ENCODE measurements at regions of chr18 and their contacts with region 1.

Region 1: DNA sequence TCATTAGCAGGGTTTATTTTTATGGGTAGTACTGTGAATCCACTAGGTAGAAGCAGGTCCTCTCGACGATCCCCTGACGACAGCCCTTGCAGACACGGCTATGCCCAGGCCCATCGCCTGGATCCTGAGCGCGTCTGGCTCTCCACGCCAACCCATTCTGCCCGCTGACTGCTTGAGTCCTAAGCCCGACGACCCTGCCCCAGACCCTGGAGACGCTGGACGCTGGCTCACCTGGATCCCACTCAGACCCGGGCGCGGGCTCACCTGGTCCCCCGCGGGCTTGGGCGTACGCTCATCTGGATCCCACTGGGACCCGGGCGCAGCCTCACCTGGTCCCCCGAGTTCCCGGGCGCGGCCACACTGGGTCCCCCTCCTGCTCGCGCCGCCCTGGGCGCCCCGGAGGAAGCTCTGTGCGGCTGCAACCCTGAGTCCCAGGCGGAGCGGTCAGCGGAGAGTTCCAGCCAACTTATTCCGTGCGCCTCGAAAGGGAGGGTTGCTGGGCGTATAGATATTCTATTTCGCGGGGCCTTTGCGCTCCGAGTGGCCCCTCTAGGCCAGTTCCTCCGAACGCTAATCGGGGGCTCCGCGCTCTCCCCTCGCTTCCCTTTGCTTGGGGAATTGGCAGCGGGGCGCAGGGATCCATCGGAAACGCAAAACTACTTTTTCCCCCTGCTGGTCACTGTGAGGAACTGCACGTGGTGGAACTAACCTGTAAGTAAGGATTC is 22.4 kb upstream of the RMP24 start:
- DNase-seq: peak; percentile 18 to 77 (median 55)
- ATAC-seq: peak; percentile 93
- H3K4me3 ChIP-seq: peak overlapping the region; percentile 53 to 70
- H3K4me3 Mint-ChIP-seq: peak overlapping the region; percentile 86
- H3K27ac ChIP-seq: no peak overlapping the region
- H3K27ac Mint-ChIP-seq: no peak overlapping the region
- H3K4me1 ChIP-seq: no peaks in the 10 kb centered on the region
- H3K4me1 Mint-ChIP-seq: no peaks in the 10 kb centered on the region
- H3K27me3 ChIP-seq: peaks cover 5 to 6% of the 10 kb centered on the region in 2 experiments
- H3K27me3 Mint-ChIP-seq: peaks cover 19% of the 10 kb centered on the region
- CTCF ChIP-seq: peak; percentile 96

Region 2: GRCh38 chr18:35231052-35231451 is 719.0 kb before region 1 on chr18:
- CTCF ChIA-PET with region 1: no interaction called
- POLR2A ChIA-PET with region 1: no interaction called
- intact Hi-C with region 1: loop called in 1 of 2 experiments (anchors 1 kb)
- DNase-seq: peak; percentile 59 to 89 (median 80)
- ATAC-seq: peak; percentile 98
- H3K4me3 ChIP-seq: no peak overlapping the region
- H3K4me3 Mint-ChIP-seq: peak overlapping the region; percentile 50
- H3K27ac ChIP-seq: no peak overlapping the region
- H3K27ac Mint-ChIP-seq: no peak overlapping the region
- H3K4me1 ChIP-seq: no peaks in the 10 kb centered on the region
- H3K4me1 Mint-ChIP-seq: peaks cover 3% of the 10 kb centered on the region
- H3K27me3 ChIP-seq: peaks cover 0 to 3% of the 10 kb centered on the region in 2 experiments
- H3K27me3 Mint-ChIP-seq: no peaks in the 10 kb centered on the region
- CTCF ChIP-seq: peak; percentile 92

Region 3: GRCh38 chr18:35386600-35387351 is 563.3 kb before region 1 on chr18:
- CTCF ChIA-PET with region 1: no interaction called
- POLR2A ChIA-PET with region 1: no interaction called
- intact Hi-C with region 1: loop called (anchors 1 to 10 kb)
- DNase-seq: peak; percentile 18 to 88 (median 64)
- ATAC-seq: peak; percentile 99
- H3K4me3 ChIP-seq: no peak overlapping the region
- H3K4me3 Mint-ChIP-seq: no peak overlapping the region
- H3K27ac ChIP-seq: no peak overlapping the region
- H3K27ac Mint-ChIP-seq: no peak overlapping the region
- H3K4me1 ChIP-seq: no peaks in the 10 kb centered on the region
- H3K4me1 Mint-ChIP-seq: peaks cover 2% of the 10 kb centered on the region
- H3K27me3 ChIP-seq: peaks cover 0 to 4% of the 10 kb centered on the region in 2 experiments
- H3K27me3 Mint-ChIP-seq: peaks cover 19% of the 10 kb centered on the region
- CTCF ChIP-seq: peak; percentile 96

Region 4: DNA sequence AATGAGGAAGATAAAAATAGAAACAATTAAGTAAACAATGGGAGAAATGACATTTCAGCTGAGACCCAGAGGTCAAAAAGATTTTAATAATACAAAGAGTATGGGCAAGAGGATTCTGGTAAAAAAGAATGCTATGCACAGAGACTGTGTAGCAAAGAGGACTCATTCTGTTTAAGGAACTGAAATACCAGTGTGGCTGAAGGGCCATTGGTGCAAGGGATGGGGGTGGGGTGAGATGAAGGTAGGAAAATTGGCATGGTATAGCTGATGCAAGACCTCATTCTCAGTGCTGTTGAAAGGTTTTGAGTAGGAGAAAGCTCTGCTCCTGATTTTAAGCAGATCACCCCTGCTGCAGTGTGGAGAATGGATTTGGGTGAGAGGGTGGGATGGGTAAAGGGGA is 357.8 kb before region 1 on chr18:
- CTCF ChIA-PET with region 1: no interaction called
- POLR2A ChIA-PET with region 1: no interaction called
- intact Hi-C with region 1: loop called (anchors 1 to 2 kb)
- DNase-seq: no peak
- ATAC-seq: no peak
- H3K4me3 ChIP-seq: no peak overlapping the region
- H3K4me3 Mint-ChIP-seq: no peak overlapping the region
- H3K27ac ChIP-seq: no peak overlapping the region
- H3K27ac Mint-ChIP-seq: no peak overlapping the region
- H3K4me1 ChIP-seq: peaks cover 4% of the 10 kb centered on the region
- H3K4me1 Mint-ChIP-seq: peaks cover 45% of the 10 kb centered on the region
- H3K27me3 ChIP-seq: no peaks in the 10 kb centered on the region
- H3K27me3 Mint-ChIP-seq: no peaks in the 10 kb centered on the region
- CTCF ChIP-seq: no peak

Region 5: DNA sequence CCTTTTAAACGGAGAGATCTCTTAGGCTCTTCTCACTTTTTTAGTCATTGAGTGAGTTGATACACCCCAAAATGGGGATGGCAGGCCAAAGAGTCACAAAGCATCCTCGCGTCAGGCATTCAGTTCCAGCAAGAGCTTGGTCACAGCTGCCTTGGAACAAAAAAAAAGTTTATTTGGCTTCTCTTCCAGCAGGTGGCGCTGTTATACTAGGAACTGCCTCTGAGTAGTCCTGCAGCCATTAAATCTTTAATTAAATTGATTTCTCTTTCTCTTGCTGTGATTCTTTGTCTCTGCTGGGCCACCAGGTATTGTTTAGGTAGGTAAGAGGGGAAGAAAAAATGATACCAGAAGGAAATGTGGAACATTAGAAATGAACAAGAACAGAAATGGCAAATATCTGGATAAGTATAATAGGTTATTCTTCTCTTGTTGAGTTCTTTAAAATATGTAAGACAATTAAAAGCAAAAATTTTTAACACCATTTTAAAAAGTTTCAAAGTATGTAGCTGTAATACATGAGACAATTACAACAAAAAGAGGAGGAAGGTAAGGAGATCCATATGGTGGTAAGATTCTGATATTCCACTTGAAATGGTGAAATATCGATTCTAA is 193.5 kb before region 1 on chr18:
- CTCF ChIA-PET with region 1: interaction called, 6 read pairs
- POLR2A ChIA-PET with region 1: no interaction called
- intact Hi-C with region 1: loop called (anchors 2 to 10 kb)
- DNase-seq: peak in 8 of 9 experiments; percentile 35 to 64 (median 54)
- ATAC-seq: peak; percentile 40
- H3K4me3 ChIP-seq: no peak overlapping the region
- H3K4me3 Mint-ChIP-seq: no peak overlapping the region
- H3K27ac ChIP-seq: no peak overlapping the region
- H3K27ac Mint-ChIP-seq: no peak overlapping the region
- H3K4me1 ChIP-seq: no peaks in the 10 kb centered on the region
- H3K4me1 Mint-ChIP-seq: no peaks in the 10 kb centered on the region
- H3K27me3 ChIP-seq: peaks cover 0 to 8% of the 10 kb centered on the region in 2 experiments
- H3K27me3 Mint-ChIP-seq: peaks cover 24% of the 10 kb centered on the region
- CTCF ChIP-seq: peak; percentile 84

Region 6: GRCh38 chr18:35938158-35938557 is 11.9 kb before region 1 on chr18:
- CTCF ChIA-PET with region 1: interaction called, 19 read pairs
- POLR2A ChIA-PET with region 1: no interaction called
- intact Hi-C with region 1: no loop called
- DNase-seq: no peak
- ATAC-seq: no peak
- H3K4me3 ChIP-seq: no peak overlapping the region
- H3K4me3 Mint-ChIP-seq: no peak overlapping the region
- H3K27ac ChIP-seq: no peak overlapping the region
- H3K27ac Mint-ChIP-seq: no peak overlapping the region
- H3K4me1 ChIP-seq: no peaks in the 10 kb centered on the region
- H3K4me1 Mint-ChIP-seq: no peaks in the 10 kb centered on the region
- H3K27me3 ChIP-seq: no peaks in the 10 kb centered on the region
- H3K27me3 Mint-ChIP-seq: peaks cover 5% of the 10 kb centered on the region
- CTCF ChIP-seq: no peak

Region 7: GRCh38 chr18:35972197-35973052 is 22.4 kb after region 1 on chr18 and contains the start of gene RMP24:
- CTCF ChIA-PET with region 1: interaction called, 10 read pairs
- POLR2A ChIA-PET with region 1: interaction called, 5 read pairs
- intact Hi-C with region 1: loop called in 1 of 2 experiments (anchors 1 kb)
- DNase-seq: peak; percentile 88 to 97 (median 93)
- ATAC-seq: peak; percentile 84
- H3K4me3 ChIP-seq: peak within 1 kb of the TSS; percentile 60 to 89
- H3K4me3 Mint-ChIP-seq: peak within 1 kb of the TSS; percentile 94
- H3K27ac ChIP-seq: peak within 1 kb of the TSS; percentile 57 to 90
- H3K27ac Mint-ChIP-seq: peak within 1 kb of the TSS; percentile 98
- H3K4me1 ChIP-seq: peaks cover 35% of the 10 kb centered on the region
- H3K4me1 Mint-ChIP-seq: peaks cover 65% of the 10 kb centered on the region
- H3K27me3 ChIP-seq: no peaks in the 10 kb centered on the region
- H3K27me3 Mint-ChIP-seq: no peaks in the 10 kb centered on the region
- CTCF ChIP-seq: no peak